Activated CD8-positive, alpha-beta memory T cell treated with anti-CD3 and anti-CD28 coated beads, Interleukin-2, amount 10 ng/mL, durations not matched to agents 7 days and 5 days (primary cell): ENCODE measurements at regions of chr1 and their contacts with region 1.

Region 1: GRCh38 chr1:206635080-206635977 is at the start of gene DYRK3:
- DNase-seq: peak; percentile 96
- ATAC-seq: peak; percentile 93
- H3K4me3 Mint-ChIP-seq: peak within 1 kb of the TSS; percentile 76
- H3K27ac Mint-ChIP-seq: peak within 1 kb of the TSS; percentile 91
- H3K4me1 Mint-ChIP-seq: peaks cover 33% of the 10 kb centered on the region
- H3K27me3 Mint-ChIP-seq: peaks cover 19% of the 10 kb centered on the region
- total RNA-seq, gene DYRK3: 9.5 to 12.7 TPM

Region 2: DNA sequence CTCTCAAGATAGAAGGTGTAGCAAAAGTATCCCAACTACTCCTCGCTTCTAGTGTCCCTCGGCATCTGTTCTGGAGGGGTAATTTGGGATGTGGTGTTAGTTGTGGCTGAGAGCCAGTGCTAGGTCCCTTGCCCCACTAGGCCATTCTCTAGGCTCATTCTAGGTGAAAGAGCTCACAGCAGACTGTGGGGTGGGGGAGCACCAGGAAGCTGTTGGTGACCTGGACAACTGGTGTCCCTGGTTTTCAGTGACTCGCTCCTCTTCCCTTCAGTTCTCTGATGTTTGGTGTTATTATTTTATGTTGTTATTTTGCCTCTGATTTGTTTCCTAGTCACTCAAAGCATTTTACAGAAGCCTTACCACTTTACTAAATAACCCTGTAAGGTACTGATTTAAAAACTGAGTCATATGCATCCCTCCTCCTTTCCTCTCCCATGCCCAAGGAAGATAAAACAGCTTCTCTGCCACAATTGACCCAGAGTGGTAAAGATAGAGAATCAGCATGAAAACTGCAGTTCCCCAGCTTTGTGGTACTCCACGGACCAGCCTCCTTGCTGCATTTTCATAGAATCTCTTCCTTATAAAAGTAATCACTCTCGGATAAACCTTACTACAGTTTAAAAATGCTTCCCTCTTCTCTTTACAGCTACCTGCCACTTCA is 14.1 kb after region 1 on chr1:
- CTCF ChIA-PET with region 1: interaction called, 418 read pairs
- DNase-seq: no peak
- ATAC-seq: no peak
- H3K4me3 Mint-ChIP-seq: no peak overlapping the region
- H3K27ac Mint-ChIP-seq: no peak overlapping the region
- H3K4me1 Mint-ChIP-seq: no peaks in the 10 kb centered on the region
- H3K27me3 Mint-ChIP-seq: no peaks in the 10 kb centered on the region

Region 3: GRCh38 chr1:206658264-206658980 is 23.1 kb after region 1 on chr1:
- CTCF ChIA-PET with region 1: interaction called, 418 read pairs
- DNase-seq: peak; percentile 64
- ATAC-seq: peak; percentile 82
- H3K4me3 Mint-ChIP-seq: no peak overlapping the region
- H3K27ac Mint-ChIP-seq: no peak overlapping the region
- H3K4me1 Mint-ChIP-seq: peaks cover 19% of the 10 kb centered on the region
- H3K27me3 Mint-ChIP-seq: peaks cover 21% of the 10 kb centered on the region